Endothelial cell of umbilical vein (primary cell): ENCODE measurements at regions of chr5 and their contacts with region 1.

Region 1: GRCh38 chr5:173925448-173926071 is 37.4 kb downstream of the CPEB4 start:
- DNase-seq: peak; percentile 70
- H3K4me3 ChIP-seq: no peak overlapping the region
- H3K27ac ChIP-seq: no peak overlapping the region
- H3K4me1 ChIP-seq: peaks cover 15% of the 10 kb centered on the region
- H3K27me3 ChIP-seq: no peaks in the 10 kb centered on the region
- CTCF ChIP-seq: peak; percentile 48 to 57
- POLR2A ChIP-seq: no peak

Region 2: DNA sequence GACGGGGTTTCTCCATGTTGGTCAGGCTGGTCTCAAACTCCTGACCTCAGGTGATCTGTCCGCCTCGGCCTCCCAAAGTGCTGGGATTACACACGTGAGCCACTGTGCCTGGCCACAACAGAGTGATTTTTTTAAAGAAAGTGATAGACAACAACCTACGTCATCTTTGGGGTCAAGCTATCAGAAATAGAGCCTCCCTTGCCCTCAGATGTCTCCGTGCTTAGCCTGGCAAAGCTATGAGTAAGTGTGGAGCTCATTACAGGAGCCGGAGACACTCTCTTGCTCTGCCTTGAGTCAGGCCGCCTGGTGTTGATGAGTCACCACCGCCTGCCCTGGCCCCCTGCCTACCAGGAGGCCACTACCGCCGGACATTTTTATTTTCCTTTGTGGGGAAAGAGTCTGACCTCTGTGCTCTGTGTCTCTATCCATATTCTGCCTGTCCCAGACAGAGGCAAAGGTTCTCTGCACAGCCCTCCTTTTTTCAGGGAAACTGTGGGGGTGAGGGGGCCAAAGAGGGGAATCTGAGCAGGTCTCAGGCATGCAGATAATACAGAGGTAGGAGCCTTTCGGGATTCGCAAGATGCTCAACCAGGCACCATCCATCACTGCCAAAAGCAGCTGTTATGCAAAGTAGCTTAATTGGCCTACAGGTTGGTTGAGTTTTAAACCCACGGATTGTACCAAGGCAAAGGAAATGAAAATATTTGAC is 161.1 kb before region 1 on chr5:
- CTCF ChIA-PET with region 1: interaction called, 19 read pairs
- POLR2A ChIA-PET with region 1: no interaction called
- dilution Hi-C with region 1: no loop called
- intact Hi-C with region 1: no loop called
- DNase-seq: peak; percentile 92
- H3K4me3 ChIP-seq: peak overlapping the region in 1 of 3 experiments; percentile 20
- H3K27ac ChIP-seq: peak overlapping the region; percentile 91
- H3K4me1 ChIP-seq: peaks cover 27% of the 10 kb centered on the region
- H3K27me3 ChIP-seq: no peaks in the 10 kb centered on the region
- CTCF ChIP-seq: no peak
- POLR2A ChIP-seq: no peak

Region 3: DNA sequence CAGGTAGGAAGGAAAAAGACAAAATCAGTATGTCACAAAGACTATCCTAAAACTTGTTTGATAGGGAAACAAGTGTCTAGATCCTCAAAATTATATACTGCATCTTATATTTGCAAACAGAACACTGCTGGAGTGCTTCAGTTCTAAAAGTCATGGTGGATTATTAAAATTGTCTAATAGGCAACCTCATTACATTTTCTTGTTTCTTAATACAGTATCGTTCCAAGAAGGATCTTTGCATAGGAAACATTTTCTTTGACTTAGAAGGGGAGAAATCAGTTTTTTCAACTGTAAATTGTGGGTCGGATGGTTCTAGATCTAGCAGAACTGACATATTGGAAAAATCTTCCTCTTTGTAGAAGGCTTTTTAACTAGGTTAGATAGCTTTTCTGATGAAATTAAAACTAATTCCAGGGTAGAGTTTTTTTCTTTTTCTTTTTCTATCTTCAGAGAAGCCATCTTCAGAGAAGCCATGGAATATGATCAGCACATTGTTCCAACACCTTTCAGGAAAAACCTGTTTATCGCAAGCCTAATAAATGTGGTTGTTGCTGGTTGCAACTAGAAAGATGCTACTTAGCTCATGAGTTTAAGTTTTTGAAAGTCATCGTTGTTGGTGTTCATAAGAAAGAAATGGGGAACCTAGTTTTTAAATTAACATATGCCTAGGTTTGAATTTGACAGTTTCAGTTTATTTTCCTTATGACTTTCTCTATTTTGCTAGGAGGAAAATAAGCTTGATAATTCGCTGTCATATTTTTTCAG is 30.0 kb before region 1 on chr5:
- CTCF ChIA-PET with region 1: interaction called, 70 read pairs
- POLR2A ChIA-PET with region 1: interaction called, 3 read pairs
- dilution Hi-C with region 1: no loop called
- intact Hi-C with region 1: loop called (anchors 1 kb)
- DNase-seq: no peak
- H3K4me3 ChIP-seq: no peak overlapping the region
- H3K27ac ChIP-seq: no peak overlapping the region
- H3K4me1 ChIP-seq: peaks cover 22% of the 10 kb centered on the region
- H3K27me3 ChIP-seq: no peaks in the 10 kb centered on the region
- CTCF ChIP-seq: no peak
- POLR2A ChIP-seq: no peak

Region 4: DNA sequence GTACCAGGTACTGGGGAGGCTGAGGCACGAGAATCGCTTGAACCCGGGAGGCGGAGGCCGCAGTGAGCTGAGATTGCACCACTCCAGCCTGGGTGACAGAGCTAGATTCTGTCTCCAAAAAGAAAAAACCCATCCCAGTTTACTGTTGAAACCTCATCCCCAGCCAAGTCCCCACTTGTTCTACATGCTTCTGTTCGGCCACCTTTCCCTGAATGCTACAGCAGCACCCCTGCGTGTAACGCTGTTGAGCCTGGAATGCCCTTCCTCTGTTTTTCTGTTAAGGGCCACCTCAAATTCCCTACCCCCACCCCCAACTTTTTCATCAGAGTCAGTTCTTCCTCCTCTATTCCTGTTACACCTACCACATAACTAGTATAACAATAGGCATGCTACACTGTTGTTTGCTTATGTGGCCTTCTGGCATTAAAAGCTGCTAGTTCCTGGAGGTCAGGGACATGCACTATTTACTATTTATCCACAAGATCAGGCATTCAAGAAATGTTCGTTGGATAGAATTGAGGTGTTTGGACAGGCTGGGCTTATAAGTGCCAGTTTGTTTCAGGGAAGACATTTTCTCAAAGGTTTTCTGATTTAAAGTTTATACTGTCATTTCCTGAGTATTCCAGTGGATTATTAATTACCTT is 16.3 kb after region 1 on chr5:
- CTCF ChIA-PET with region 1: interaction called, 31 read pairs
- POLR2A ChIA-PET with region 1: no interaction called
- dilution Hi-C with region 1: no loop called
- intact Hi-C with region 1: loop called (anchors 1 kb)
- DNase-seq: peak; percentile 65
- H3K4me3 ChIP-seq: no peak overlapping the region
- H3K27ac ChIP-seq: no peak overlapping the region
- H3K4me1 ChIP-seq: peaks cover 9% of the 10 kb centered on the region
- H3K27me3 ChIP-seq: no peaks in the 10 kb centered on the region
- CTCF ChIP-seq: no peak
- POLR2A ChIP-seq: no peak

Region 5: DNA sequence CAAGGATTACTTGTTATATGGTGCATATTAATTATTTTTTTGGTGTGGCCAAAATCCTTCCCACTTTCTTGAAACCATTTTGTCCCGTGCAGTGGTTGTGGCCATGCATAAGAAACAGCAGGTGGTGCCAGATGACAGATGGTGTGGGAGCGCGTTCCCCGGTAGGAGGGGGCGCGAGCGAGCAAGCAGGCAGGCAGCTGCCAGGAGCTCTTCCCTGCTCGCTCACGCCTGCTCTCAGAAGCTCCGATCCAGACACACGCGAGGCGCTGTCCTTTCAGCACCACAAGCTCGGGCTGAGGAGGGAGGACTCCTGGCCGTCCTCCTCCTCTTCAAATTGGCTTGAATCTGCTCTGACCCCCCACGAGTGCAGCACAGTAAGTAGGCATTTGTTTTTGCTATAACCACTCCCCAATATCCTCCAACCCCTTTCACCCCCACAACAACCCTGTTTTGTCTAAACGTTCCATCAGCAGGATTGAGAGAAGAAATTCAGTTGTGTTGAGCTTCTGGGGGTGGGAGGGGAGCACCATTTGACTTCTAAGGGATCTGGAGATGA is 120.0 kb after region 1 on chr5 and contains the start of gene NSG2:
- CTCF ChIA-PET with region 1: no interaction called
- POLR2A ChIA-PET with region 1: no interaction called
- dilution Hi-C with region 1: no loop called
- intact Hi-C with region 1: no loop called
- DNase-seq: peak; percentile 24
- H3K4me3 ChIP-seq: no peak within 1 kb of the TSS
- H3K27ac ChIP-seq: no peak within 1 kb of the TSS
- H3K4me1 ChIP-seq: no peaks in the 10 kb centered on the region
- H3K27me3 ChIP-seq: no peaks in the 10 kb centered on the region
- CTCF ChIP-seq: peak in 1 of 2 donors; percentile 9
- POLR2A ChIP-seq: no peak
- total RNA-seq, gene NSG2: not detected in 2 replicates